Thyroid gland (tissue), 4 donors: ENCODE measurements at regions of chr11 and their contacts with region 1.

Region 1: DNA sequence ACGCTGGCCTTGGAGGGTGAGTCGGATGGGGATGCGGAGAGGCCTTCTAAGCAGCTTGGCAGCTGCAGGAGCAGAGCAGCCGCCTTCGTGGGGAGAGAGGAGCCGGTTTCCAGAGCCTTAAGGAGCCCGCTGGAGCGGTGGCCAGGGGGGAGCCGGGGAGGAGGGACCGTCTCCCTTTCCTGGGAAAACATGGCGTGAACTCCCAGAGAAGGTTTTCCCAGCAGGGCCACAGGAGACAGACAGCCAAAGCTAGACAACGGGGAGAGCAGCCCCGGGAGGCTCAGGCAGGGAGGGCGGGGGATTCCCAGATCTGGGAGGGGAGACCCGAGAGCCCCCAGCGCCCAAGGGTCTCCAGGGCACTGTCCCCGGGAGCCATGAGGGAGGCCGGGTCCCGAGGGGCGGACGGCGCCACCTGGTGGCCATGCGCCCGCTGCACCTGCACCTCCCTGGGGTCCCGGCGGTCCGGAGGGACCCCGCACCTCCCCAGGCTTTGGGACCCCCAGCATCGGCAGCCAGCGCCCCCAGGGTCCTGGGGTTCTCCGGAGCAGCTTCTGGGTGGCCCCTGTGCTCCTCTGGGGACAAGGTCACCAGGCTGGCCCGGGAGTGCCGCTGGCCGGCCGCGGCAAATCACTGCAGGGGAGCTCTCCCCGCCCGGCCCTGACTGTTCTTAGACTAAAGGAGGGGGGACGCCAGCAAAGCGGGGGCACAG is 2.4 kb upstream of the SYT8 start:
- DNase-seq: peak; percentile 51
- H3K4me3 ChIP-seq: no peak overlapping the region
- H3K27ac ChIP-seq: no peak overlapping the region
- H3K4me1 ChIP-seq: peaks cover 0 to 16% of the 10 kb centered on the region in 2 donors
- H3K27me3 ChIP-seq: no peaks in the 10 kb centered on the region
- CTCF ChIP-seq: peak; percentile 68 to 97 (median 90)
- POLR2A ChIP-seq: no peak

Region 2: GRCh38 chr11:1652771-1653540 is 179.4 kb before region 1 on chr11:
- intact Hi-C with region 1: loop called (anchors 5 kb)
- DNase-seq: peak; percentile 66 to 76
- H3K4me3 ChIP-seq: no peak overlapping the region
- H3K27ac ChIP-seq: no peak overlapping the region
- H3K4me1 ChIP-seq: no peaks in the 10 kb centered on the region
- H3K27me3 ChIP-seq: no peaks in the 10 kb centered on the region
- CTCF ChIP-seq: peak; percentile 75 to 99 (median 92)
- POLR2A ChIP-seq: no peak

Region 3: DNA sequence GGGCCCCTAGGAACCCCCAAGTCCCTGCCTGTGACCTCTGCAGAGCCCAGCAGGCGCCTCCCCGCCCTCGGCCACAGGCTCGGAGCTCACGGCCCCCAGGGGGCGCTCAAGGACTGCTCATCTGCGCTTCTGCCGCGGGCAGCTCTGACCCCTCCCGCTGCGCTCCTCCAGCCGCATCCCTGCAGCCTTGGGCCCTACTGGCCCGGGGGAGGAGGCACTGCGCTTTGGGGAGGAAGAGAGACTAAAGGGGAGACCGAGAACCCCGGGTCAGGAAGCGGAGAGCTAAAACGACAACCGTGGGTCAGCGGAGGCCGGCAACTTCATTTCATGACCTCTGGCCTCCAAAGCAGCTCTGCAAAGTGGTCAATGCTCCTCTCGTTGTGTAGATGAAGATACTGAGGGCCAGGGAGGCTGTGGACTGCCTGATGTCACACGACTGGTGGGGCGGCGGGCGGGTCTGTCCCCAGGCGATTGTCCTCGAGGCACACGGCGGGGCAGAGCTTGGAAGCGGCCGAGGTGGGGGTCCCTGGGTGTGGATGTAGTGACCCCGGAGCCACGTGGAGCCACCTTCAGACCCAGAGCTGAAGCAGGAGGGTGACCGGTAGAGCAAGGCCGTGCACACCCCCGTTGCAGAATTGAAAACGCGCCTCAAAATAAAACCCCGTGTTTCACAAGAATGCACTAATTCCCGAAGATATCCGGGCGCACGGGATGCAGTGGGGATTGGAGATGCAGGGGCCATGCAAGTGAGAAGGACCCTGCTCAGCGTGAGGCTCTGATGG is 138.1 kb before region 1 on chr11:
- intact Hi-C with region 1: loop called (anchors 1 kb)
- DNase-seq: peak; percentile 77 to 80
- H3K4me3 ChIP-seq: peak overlapping the region in 1 of 3 donors; percentile 37
- H3K27ac ChIP-seq: peak overlapping the region in 1 of 3 donors; percentile 27
- H3K4me1 ChIP-seq: peaks cover 9 to 13% of the 10 kb centered on the region in 2 donors
- H3K27me3 ChIP-seq: no peaks in the 10 kb centered on the region
- CTCF ChIP-seq: peak; percentile 62 to 93 (median 88)
- POLR2A ChIP-seq: no peak